Activated T-helper 1 cell treated with anti-CD3 and anti-CD28 coated beads, Interleukin-12 subunit alpha, Interleukin-12 subunit beta, Interleukin-2, Interleukin-4 antibody, amounts not matched to agents 30 ng/mL and 10 ng/mL and 1 ng/mL, durations not matched to agents 14 hours and 24 hours and 36 hours (primary cell): ENCODE measurements at regions of chr16 and their contacts with region 1.

Region 1: DNA sequence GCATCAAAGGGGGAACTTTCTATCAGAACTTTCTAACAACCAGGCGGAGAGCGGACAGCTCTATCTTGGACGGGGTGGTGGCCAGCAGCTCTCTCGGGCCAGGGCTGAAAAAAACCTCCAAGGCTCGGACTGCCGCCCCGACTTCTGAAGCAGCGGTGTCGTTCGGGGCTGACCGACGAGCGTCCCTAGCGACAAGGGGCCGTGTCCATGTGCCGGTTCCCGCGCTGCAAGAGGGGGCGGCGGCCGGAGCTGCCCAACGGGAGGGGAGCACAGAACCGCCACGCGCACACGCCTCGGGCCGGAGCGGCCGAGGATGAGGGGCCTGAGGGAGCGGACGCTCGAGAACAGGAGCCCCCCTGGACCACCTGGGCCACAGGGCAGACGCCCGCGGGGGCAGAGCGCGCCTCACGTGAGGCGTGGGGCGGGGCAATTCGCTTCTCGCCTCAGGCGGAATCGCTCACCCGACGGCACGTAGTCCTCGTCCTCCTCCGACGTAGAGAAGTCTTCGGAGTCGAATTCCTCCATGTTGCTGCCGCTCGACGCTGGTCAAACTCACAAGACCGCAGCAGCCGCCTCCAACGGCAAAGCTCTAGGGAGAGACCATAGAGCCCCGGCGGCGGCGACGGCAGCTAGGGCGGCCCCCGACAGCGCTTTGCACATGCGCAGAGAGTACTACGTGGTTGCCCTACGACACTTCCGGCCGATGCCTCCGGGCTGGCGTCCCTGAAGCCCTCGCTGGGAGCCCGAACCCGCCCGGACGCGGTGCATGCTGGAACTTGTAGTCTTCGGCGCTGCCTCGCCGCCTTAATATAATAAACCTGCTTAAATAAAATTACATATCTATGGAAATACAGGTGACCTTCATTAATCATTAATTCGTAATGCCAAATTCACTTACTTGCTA is at the start of gene CFDP1:
- DNase-seq: peak; percentile 93
- H3K4me3 Mint-ChIP-seq: peak within 1 kb of the TSS; percentile 85
- H3K27ac Mint-ChIP-seq: peak within 1 kb of the TSS; percentile 99
- H3K4me1 Mint-ChIP-seq: peaks cover 21% of the 10 kb centered on the region
- H3K27me3 Mint-ChIP-seq: no peaks in the 10 kb centered on the region
- total RNA-seq, gene CFDP1: 35.4 TPM in 2 replicates

Region 2: DNA sequence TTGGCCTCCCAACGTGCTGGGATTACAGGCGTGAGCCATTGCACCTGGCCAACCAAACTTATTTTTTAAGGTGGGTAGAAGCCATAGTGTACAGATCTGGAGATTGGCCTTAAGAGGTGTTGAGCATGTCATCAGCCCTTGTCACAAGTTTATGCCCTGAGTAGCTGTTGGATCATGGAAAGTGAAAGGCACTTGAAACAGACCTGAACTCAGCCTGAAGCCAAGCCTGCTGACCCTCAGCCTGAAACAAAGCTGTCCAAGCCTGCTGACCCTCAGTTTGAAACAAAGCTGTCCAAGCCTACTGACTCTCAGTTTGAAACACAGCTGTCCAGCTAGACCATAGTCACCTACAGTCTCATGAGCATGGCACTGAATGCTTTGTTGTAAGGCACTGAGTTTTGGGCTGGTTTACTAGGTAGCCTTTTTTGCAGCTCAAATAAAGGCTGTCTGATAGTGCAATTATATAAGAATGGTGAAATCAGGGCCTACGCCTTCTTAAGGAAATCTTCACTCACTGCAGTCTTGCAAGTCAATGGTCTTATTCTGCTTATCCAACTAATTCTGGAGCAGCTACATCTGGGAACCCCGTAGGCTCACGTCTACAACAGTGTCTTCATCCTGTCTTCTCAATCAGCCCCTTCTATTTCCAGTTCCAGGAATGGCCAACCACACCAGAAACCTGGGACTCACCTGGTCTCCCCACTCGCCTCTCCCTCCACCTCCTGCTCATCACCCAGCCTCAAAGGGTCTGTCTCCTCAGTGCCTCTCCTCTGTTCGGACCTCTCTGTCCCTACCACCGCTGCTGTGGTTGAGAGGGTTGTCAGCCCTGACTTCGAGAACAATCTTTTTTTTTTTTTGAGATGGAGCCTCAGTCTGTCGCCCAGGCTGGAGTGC is 1059.9 kb before region 1 on chr16:
- intact Hi-C with region 1: loop called (anchors 5 kb)
- DNase-seq: no peak
- H3K4me3 Mint-ChIP-seq: no peak overlapping the region
- H3K27ac Mint-ChIP-seq: no peak overlapping the region
- H3K4me1 Mint-ChIP-seq: peaks cover 6% of the 10 kb centered on the region
- H3K27me3 Mint-ChIP-seq: no peaks in the 10 kb centered on the region

Region 3: DNA sequence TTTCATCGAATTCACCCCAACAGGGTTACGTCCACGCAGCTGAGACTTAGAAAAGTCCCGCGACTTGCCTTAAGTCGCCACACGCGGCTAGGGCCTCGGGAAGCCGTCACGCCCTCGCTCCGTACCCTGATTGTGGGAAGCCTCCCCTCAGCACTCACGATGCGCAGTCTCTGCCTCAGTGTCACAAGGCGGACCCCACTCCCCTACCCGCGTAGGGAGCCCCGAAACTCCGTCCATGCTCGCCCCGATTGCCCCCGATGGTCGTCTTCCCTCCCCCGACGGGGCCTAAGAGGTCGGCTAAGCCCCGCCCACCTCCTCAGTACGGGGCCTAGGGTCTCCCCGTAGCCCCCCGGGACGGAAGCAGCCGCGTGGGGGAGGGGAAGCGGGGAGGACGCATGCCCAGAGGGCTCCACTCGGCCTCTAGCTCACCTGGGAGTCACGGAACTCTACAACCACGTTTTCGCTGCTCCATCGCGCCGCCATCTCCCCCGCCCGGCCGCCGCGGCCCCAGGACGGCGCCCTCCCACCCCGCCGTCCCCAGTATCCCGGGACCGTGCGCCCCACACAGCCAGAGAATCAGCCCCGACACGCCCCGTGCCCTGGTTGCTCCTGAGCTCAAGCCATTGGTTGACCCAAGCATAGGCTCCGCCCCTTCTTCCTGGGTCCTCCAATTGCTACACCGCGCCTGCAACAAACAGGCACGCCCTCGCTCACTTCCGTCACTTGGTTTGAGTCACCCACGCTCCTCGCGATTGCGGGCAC is 448.4 kb before region 1 on chr16 and contains the start of gene WDR59:
- intact Hi-C with region 1: loop called (anchors 1 kb)
- DNase-seq: peak; percentile 99
- H3K4me3 Mint-ChIP-seq: peak within 1 kb of the TSS; percentile 90
- H3K27ac Mint-ChIP-seq: peak within 1 kb of the TSS; percentile 90
- H3K4me1 Mint-ChIP-seq: peaks cover 14% of the 10 kb centered on the region
- H3K27me3 Mint-ChIP-seq: peaks cover 3% of the 10 kb centered on the region
- total RNA-seq, gene WDR59: 85.9 and 95.3 TPM in 2 replicates

Region 4: DNA sequence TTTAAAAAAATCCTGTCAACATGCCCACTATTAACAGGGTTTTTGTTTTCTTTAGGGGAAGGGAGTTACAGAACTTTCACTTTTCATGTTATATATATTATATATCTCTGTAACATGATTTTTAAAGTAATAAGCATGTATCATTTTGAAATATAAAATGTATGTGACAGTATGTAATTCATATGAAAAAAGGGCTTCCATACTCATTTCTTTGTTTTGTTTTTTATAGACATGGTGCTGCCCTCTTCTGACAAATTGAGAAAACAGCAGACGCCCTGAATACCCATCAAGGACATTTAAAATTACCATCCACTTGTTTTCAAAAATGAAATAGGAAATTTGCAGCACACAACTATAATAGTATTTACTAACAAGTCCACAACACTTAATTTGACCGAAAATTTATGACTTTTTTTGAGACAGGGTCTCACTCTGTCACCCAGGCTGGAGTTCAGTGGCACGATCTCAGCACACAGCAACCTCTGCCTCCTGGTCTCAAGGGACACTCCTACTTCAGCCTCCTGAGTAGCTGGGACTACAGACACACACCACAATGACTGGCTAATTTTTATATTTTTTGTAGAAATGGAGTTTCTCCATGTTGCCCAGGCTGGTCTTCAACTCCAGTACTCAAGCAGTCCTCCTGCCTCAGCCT is 30.1 kb before region 1 on chr16:
- intact Hi-C with region 1: loop called (anchors 1 kb)
- DNase-seq: no peak
- H3K4me3 Mint-ChIP-seq: no peak overlapping the region
- H3K27ac Mint-ChIP-seq: peak overlapping the region; percentile 15
- H3K4me1 Mint-ChIP-seq: peaks cover 12% of the 10 kb centered on the region
- H3K27me3 Mint-ChIP-seq: no peaks in the 10 kb centered on the region

Region 5: GRCh38 chr16:75555707-75556430 is 122.8 kb after region 1 on chr16 and contains the start of gene TMEM231:
- intact Hi-C with region 1: loop called (anchors 2 kb)
- DNase-seq: peak; percentile 95
- H3K4me3 Mint-ChIP-seq: peak within 1 kb of the TSS; percentile 92
- H3K27ac Mint-ChIP-seq: peak within 1 kb of the TSS; percentile 89
- H3K4me1 Mint-ChIP-seq: peaks cover 11% of the 10 kb centered on the region
- H3K27me3 Mint-ChIP-seq: peaks cover 7% of the 10 kb centered on the region
- total RNA-seq, gene TMEM231: 4.5 and 4.7 TPM in 2 replicates

Region 6: GRCh38 chr16:77190478-77191258 is 1757.6 kb after region 1 on chr16 and contains the start of gene MON1B:
- intact Hi-C with region 1: loop called (anchors 1 kb)
- DNase-seq: peak; percentile 93
- H3K4me3 Mint-ChIP-seq: peak within 1 kb of the TSS; percentile 97
- H3K27ac Mint-ChIP-seq: peak within 1 kb of the TSS; percentile 100
- H3K4me1 Mint-ChIP-seq: peaks cover 39% of the 10 kb centered on the region
- H3K27me3 Mint-ChIP-seq: peaks cover 4% of the 10 kb centered on the region
- total RNA-seq, gene MON1B: 66.2 and 70.1 TPM in 2 replicates